ENCODE measurements at regions of chr16 and their contacts with region 1.

Region 1: DNA sequence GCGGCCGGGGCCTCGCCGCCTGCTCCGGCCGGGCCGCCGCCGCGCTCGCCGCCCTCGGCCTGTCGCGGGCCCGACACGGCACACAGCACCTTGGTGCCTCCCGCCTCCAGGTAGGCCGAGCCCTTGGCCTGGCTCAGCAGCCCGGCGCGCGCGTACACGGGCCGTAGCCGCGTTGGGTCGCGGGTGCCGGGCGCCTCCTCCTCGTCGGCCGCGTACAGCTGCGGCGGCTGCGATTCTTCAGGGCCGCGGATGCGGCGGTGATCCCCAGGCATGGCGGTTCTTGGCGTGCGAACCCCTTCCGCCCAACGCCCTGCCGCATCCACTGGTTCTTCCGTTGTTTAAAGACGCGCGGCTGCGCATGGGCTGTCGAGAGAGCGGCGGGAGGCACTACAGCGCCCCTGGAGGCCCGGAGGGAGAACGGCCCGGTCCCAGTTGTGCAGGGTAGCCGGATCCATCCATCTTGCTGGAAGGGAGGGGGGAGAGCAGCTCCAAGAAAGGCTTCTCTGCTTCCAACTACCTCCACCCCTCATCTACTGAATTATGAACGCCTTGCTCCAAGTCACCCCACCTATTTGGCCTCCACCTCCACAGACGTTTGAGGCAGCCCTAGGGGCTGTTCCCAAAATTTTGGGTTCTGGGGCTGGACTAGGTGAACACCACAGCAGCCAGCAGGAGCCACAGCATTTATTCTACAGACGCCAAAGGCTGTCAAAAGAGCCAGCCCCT is at the start of gene EXOSC6:
- DNase-seq: peak; percentile 96
- ATAC-seq: peak; percentile 91
- H3K4me3 Mint-ChIP-seq: peak within 1 kb of the TSS; percentile 87
- H3K27ac Mint-ChIP-seq: peak within 1 kb of the TSS; percentile 96
- H3K4me1 Mint-ChIP-seq: peaks cover 20% of the 10 kb centered on the region
- H3K27me3 Mint-ChIP-seq: no peaks in the 10 kb centered on the region
- total RNA-seq, gene EXOSC6: 27.6 to 28.5 TPM

Region 2: DNA sequence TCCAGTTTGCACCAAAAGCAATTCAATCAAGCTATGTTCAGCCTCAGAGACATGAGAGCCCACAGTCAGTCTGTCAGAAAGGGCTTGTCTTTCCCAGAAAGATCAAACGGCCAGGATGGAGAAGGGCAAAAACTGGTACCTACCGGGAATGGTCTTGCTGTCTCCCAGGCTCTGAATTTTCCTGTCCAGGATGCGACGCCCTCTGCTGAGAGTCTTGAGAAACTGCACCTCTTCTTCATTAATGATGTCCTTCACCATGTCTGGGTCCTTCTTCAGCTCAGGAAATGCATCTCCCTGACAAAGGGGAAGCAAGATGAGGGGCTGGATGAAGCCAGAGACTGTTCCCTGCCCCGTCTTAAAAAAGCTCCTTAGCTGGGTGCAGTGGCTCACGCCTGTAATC is 15.7 kb after region 1 on chr16:
- CTCF ChIA-PET with region 1: interaction called, 24 read pairs
- POLR2A ChIA-PET with region 1: interaction called, 3 read pairs
- DNase-seq: peak; percentile 37
- ATAC-seq: no peak
- H3K4me3 Mint-ChIP-seq: no peak overlapping the region
- H3K27ac Mint-ChIP-seq: no peak overlapping the region
- H3K4me1 Mint-ChIP-seq: no peaks in the 10 kb centered on the region
- H3K27me3 Mint-ChIP-seq: no peaks in the 10 kb centered on the region

Region 3: GRCh38 chr16:70289229-70290098 is 37.7 kb after region 1 on chr16 and contains the start of gene AARS1:
- CTCF ChIA-PET with region 1: interaction called, 50 read pairs
- POLR2A ChIA-PET with region 1: interaction called, 17 read pairs
- DNase-seq: peak; percentile 97
- ATAC-seq: peak; percentile 97
- H3K4me3 Mint-ChIP-seq: peak within 1 kb of the TSS; percentile 100
- H3K27ac Mint-ChIP-seq: peak within 1 kb of the TSS; percentile 100
- H3K4me1 Mint-ChIP-seq: peaks cover 36% of the 10 kb centered on the region
- H3K27me3 Mint-ChIP-seq: no peaks in the 10 kb centered on the region
- total RNA-seq, gene AARS1: 98.5 to 103 TPM

Region 4: GRCh38 chr16:70388006-70388680 is 136.4 kb after region 1 on chr16:
- CTCF ChIA-PET with region 1: no interaction called
- POLR2A ChIA-PET with region 1: no interaction called
- DNase-seq: no peak
- ATAC-seq: no peak
- H3K4me3 Mint-ChIP-seq: no peak overlapping the region
- H3K27ac Mint-ChIP-seq: no peak overlapping the region
- H3K4me1 Mint-ChIP-seq: peaks cover 9% of the 10 kb centered on the region
- H3K27me3 Mint-ChIP-seq: no peaks in the 10 kb centered on the region

Measured in activated CD8-positive, alpha-beta T cell treated with anti-CD3 and anti-CD28 coated beads, Interleukin-2, amount 10 ng/mL, durations not matched to agents 7 days and 5 days (primary cell).